PC-3 (cell line): ENCODE measurements at regions of chr1 and their contacts with region 1.

Region 1: DNA sequence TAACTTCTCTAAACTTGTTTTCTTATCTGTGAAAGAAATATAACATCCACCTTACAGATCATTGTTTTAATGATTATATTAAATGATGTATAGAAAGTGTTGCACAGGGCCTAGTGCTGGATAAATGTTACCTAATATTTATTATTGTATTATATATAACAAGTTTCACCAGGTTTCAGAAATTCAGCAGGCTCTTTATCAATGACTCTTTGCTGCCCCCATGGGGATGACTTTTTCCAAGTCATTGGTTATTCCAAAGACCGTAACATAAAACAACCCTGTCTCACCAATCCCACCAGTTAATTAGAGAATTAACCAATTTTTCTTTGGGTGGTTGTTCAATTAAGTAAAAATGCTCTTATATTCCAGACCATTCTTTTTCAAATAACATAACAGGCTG is 7.3 kb upstream of the DEDD start:
- DNase-seq: peak; percentile 77
- ATAC-seq: peak; percentile 78
- H3K4me3 ChIP-seq: no peak overlapping the region
- H3K27ac ChIP-seq: no peak overlapping the region
- H3K4me1 ChIP-seq: no peaks in the 10 kb centered on the region
- H3K27me3 ChIP-seq: no peaks in the 10 kb centered on the region
- CTCF ChIP-seq: peak; percentile 74

Region 2: GRCh38 chr1:160997323-160998038 is 142.3 kb before region 1 on chr1:
- CTCF ChIA-PET with region 1: no interaction called
- POLR2A ChIA-PET with region 1: no interaction called
- intact Hi-C with region 1: loop called (anchors 1 kb)
- DNase-seq: peak; percentile 74
- ATAC-seq: peak; percentile 73
- H3K4me3 ChIP-seq: no peak overlapping the region
- H3K27ac ChIP-seq: peak overlapping the region; percentile 85
- H3K4me1 ChIP-seq: peaks cover 33% of the 10 kb centered on the region
- H3K27me3 ChIP-seq: no peaks in the 10 kb centered on the region
- CTCF ChIP-seq: peak; percentile 82

Region 3: DNA sequence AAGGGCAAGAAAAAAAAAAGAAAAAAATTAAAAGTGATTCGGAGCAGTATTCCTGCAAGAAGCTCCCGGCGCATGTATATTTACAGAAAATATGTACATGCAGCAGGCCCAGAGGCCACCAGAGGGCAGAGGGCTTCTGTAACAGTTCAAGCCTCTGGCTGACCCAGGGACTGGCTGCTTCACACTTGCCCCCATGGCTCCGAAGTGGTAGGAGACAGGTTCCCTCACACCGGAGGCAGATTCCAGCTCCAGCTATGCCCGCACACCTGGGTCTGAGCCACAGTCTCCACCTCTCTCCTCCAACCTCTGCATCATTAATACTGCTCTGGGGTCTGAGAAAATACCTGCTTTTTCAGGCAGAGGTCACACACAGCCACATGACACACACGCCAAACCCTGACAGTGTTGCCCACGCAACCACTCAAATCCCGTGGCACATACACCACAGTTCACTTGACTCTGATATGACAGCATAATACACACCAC is 67.8 kb before region 1 on chr1:
- CTCF ChIA-PET with region 1: no interaction called
- POLR2A ChIA-PET with region 1: no interaction called
- intact Hi-C with region 1: loop called (anchors 1 kb)
- DNase-seq: peak; percentile 70
- ATAC-seq: peak; percentile 56
- H3K4me3 ChIP-seq: no peak overlapping the region
- H3K27ac ChIP-seq: no peak overlapping the region
- H3K4me1 ChIP-seq: no peaks in the 10 kb centered on the region
- H3K27me3 ChIP-seq: no peaks in the 10 kb centered on the region
- CTCF ChIP-seq: peak; percentile 74